ENCODE measurements at regions of chr21 and their contacts with region 1.

Region 1: GRCh38 chr21:31180256-31181081 is 142.2 kb upstream of the KRTAP19-8 start:
- H3K4me3 ChIP-seq: no peak overlapping the region
- H3K27ac ChIP-seq: no peak overlapping the region
- H3K4me1 ChIP-seq: no peaks in the 10 kb centered on the region
- CTCF ChIP-seq: no peak

Region 2: GRCh38 chr21:31098576-31099005 is 81.9 kb before region 1 on chr21:
- CTCF ChIA-PET with region 1: interaction called, 94 read pairs
- POLR2A ChIA-PET with region 1: no interaction called
- H3K4me3 ChIP-seq: no peak overlapping the region
- H3K27ac ChIP-seq: no peak overlapping the region
- H3K4me1 ChIP-seq: no peaks in the 10 kb centered on the region
- CTCF ChIP-seq: peak; percentile 71; the same call in 1 of the 2 replicates

Region 3: DNA sequence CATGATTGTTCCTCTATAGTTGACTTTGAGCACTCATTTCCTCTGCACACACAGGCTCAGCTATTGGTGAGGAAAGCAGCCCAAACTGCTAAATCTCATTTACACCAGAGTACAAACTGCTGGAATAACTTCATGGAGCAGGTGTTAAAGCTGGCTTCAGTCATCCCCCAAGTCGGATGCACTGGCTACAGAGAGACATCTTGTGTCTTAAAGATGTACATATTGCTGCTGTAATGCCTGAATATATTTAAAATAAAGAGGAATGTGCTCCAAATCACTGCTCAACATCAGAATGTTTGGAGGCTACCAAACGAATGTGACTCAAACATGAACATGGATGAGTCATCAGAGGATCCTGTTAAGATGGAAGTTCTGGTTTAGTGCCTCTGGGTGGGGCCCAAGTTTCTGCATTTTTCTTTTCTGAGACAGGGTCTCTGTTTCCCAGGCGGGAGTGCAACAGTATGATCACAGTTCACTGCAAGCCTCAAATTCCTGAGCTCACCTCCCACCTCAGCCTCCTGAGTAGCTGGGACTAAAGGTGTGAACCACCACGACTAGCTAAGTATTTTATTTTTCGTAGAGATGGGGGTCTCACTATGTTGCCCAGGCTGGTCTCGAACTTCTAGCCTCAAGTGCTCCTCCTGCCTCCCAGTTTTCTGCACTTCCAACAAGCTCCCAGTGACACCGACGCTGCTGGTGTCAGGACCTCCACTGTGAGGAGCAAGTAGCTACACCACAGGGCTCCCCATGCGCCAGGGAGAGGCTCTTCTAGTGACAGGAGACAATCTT is 63.1 kb before region 1 on chr21:
- CTCF ChIA-PET with region 1: interaction called, 12 read pairs
- POLR2A ChIA-PET with region 1: no interaction called
- H3K4me3 ChIP-seq: no peak overlapping the region
- H3K27ac ChIP-seq: no peak overlapping the region
- H3K4me1 ChIP-seq: no peaks in the 10 kb centered on the region
- CTCF ChIP-seq: no peak

Region 4: GRCh38 chr21:31161157-31161556 is 19.3 kb before region 1 on chr21:
- CTCF ChIA-PET with region 1: interaction called, 15 read pairs
- POLR2A ChIA-PET with region 1: no interaction called
- H3K4me3 ChIP-seq: no peak overlapping the region
- H3K27ac ChIP-seq: no peak overlapping the region
- H3K4me1 ChIP-seq: peaks cover 4% of the 10 kb centered on the region
- CTCF ChIP-seq: no peak

Region 5: DNA sequence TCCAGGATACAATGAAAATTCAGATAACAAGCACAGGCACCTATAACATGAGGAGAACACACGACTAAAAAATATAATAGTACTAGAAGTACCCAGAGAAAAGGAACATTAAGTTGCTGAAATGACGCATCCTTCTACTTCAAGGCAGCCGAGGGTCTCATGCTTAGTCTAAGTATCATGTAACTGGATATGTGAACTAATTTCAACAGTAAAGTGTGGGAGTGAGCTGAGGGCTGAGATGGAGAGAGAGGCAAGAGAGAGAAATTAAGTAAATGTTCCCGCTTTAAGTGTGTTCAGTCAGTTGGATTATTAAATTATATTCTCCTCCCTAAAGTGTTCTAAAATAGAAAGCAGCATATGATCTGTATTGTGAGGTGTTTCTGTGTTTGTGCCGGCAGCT is 10.0 kb after region 1 on chr21:
- CTCF ChIA-PET with region 1: interaction called, 17 read pairs
- POLR2A ChIA-PET with region 1: no interaction called
- H3K4me3 ChIP-seq: no peak overlapping the region
- H3K27ac ChIP-seq: no peak overlapping the region
- H3K4me1 ChIP-seq: peaks cover 8% of the 10 kb centered on the region; the same call in 1 of the 2 replicates
- CTCF ChIP-seq: no peak

Region 6: DNA sequence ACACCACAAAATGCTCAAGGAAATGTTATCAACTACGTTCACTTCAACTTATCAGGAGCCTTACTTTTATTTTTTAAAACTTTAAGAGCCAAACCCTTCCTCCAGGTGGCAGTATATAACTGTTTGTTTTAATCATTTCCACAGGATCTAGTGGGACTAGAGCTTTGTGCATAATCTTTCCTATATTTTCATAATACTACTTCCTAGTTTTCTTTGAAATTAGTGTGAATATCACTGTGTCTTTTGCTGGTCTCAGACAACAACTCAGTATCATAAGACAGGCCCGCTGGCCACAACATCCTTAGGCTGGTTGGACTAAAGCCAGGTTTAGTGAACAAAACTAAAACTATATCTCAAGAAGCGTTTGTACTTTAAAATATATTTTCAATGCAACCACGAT is 18.1 kb after region 1 on chr21:
- CTCF ChIA-PET with region 1: interaction called, 17 read pairs
- POLR2A ChIA-PET with region 1: no interaction called
- H3K4me3 ChIP-seq: no peak overlapping the region
- H3K27ac ChIP-seq: no peak overlapping the region
- H3K4me1 ChIP-seq: peaks cover 11% of the 10 kb centered on the region; the same call in 1 of the 2 replicates
- CTCF ChIP-seq: no peak